Activated CD4-positive, alpha-beta T cell treated with anti-CD3 and anti-CD28 coated beads, Interleukin-2, amount 10 ng/mL, durations not matched to agents 7 days and 5 days (primary cell): ENCODE measurements at regions of chrX and their contacts with region 1.

Region 1: GRCh38 chrX:16882702-16883486 is 12.7 kb upstream of the RBBP7 start:
- DNase-seq: peak; percentile 65
- H3K4me3 Mint-ChIP-seq: peak overlapping the region; percentile 60
- H3K27ac Mint-ChIP-seq: peak overlapping the region; percentile 42
- H3K4me1 Mint-ChIP-seq: peaks cover 6% of the 10 kb centered on the region
- H3K27me3 Mint-ChIP-seq: peaks cover 6% of the 10 kb centered on the region

Region 2: DNA sequence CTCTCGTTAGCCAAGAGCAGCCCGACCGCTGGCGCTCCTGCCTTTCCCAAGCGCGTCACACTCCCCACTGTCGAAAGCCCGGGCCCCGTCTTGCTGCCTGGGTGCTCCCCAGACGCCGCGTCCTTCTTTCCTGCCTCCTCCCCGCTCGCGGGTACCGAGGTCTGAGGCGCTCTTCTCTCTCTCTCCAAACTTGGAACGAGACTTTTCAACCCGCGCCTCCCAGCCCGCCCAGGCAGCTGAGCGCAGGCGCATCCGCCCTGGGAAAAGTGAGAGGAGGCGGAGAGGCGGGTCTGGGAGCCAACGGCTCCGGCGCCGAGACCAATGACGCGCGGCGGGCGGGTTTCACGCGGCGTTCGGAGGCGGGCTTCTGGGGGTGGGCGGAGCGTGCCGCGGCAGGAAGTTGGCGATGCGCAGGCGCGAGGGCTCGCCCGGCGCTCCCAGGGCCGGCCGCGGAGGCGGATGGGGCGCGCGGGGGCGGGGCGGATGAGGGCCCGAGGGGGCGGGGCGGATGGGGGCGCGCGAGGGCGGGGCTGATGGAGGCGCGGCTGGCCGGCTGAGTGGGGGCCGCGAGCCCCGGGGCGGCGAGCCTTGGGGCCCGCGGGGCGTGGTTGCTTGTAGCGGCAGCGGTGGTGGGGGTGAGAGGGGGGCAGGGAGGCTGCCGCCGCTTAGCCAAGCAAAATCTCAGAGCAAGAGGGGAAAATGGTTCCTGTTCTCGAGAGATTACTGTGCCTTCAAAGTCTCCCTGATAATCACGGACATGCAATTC is 12.6 kb before region 1 on chrX and contains the start of gene RBBP7:
- CTCF ChIA-PET with region 1: interaction called, 25 read pairs
- POLR2A ChIA-PET with region 1: no interaction called
- DNase-seq: peak; percentile 88
- H3K4me3 Mint-ChIP-seq: peak within 1 kb of the TSS; percentile 93
- H3K27ac Mint-ChIP-seq: peak within 1 kb of the TSS; percentile 98
- H3K4me1 Mint-ChIP-seq: peaks cover 33% of the 10 kb centered on the region
- H3K27me3 Mint-ChIP-seq: peaks cover 7% of the 10 kb centered on the region
- total RNA-seq, gene RBBP7: 149 to 191 TPM

Region 3: GRCh38 chrX:16979226-16979625 is 96.3 kb after region 1 on chrX:
- CTCF ChIA-PET with region 1: no interaction called
- POLR2A ChIA-PET with region 1: no interaction called
- DNase-seq: no peak
- H3K4me3 Mint-ChIP-seq: no peak overlapping the region
- H3K27ac Mint-ChIP-seq: no peak overlapping the region
- H3K4me1 Mint-ChIP-seq: no peaks in the 10 kb centered on the region
- H3K27me3 Mint-ChIP-seq: no peaks in the 10 kb centered on the region